Naive thymus-derived CD4-positive, alpha-beta T cell (primary cell): ENCODE measurements at regions of chr18 and their contacts with region 1.

Region 1: DNA sequence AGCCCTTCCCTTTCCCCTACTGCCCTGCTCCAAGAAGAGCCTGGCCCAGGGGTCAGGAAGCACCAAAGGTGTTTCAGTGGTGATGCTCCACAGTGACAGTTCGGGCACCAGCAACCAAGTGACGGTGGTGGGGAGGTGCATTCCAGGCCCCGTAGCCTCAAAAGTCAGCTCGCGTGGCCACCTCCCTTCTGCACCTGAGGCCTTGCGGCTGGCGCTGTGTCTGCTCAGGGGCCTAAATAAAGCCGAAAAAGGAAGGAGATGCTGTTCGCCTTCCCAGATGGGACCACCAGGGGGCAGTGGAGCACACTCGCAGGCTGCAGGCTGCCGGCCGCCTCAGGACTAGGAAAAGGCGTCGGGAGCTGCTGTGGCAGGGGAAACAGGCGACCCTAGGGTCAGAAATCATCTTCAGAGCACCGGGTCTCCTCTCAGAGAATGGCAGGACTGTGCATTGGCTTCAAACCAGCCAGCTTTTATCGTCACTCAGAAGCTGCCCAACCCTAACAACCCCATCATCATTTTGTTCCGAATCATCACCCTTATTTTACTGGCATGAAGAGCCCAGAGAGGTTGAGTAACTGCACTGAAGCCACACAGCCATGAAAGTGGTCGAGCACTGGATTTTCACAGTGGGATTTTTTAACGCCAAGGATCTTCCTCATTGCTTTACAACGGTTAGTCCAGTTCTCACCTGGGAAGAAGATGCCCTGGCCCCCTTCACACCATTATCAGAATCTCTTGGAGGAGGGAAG is 213.0 kb upstream of the CELF4 start:
- DNase-seq: peak in 2 of 9 donors; percentile 1 to 54
- ATAC-seq: no peak
- H3K4me3 ChIP-seq: no peak overlapping the region
- H3K4me3 Mint-ChIP-seq: no peak overlapping the region
- H3K27ac ChIP-seq: no peak overlapping the region
- H3K27ac Mint-ChIP-seq: no peak overlapping the region
- H3K4me1 ChIP-seq: no peaks in the 10 kb centered on the region
- H3K4me1 Mint-ChIP-seq: no peaks in the 10 kb centered on the region
- H3K27me3 ChIP-seq: no peaks in the 10 kb centered on the region
- H3K27me3 Mint-ChIP-seq: peaks cover 0 to 14% (median 8%) of the 10 kb centered on the region in 5 donors

Region 2: GRCh38 chr18:37734406-37734805 is 44.2 kb before region 1 on chr18:
- CTCF ChIA-PET with region 1: no interaction called
- POLR2A ChIA-PET with region 1: no interaction called
- intact Hi-C with region 1: no loop called
- DNase-seq: no peak
- ATAC-seq: no peak
- H3K4me3 ChIP-seq: no peak overlapping the region
- H3K4me3 Mint-ChIP-seq: no peak overlapping the region
- H3K27ac ChIP-seq: no peak overlapping the region
- H3K27ac Mint-ChIP-seq: no peak overlapping the region
- H3K4me1 ChIP-seq: no peaks in the 10 kb centered on the region
- H3K4me1 Mint-ChIP-seq: no peaks in the 10 kb centered on the region
- H3K27me3 ChIP-seq: no peaks in the 10 kb centered on the region
- H3K27me3 Mint-ChIP-seq: peaks cover 0 to 3% (median 0%) of the 10 kb centered on the region in 5 donors

Region 3: GRCh38 chr18:39571511-39571910 is 1792.9 kb after region 1 on chr18:
- CTCF ChIA-PET with region 1: no interaction called
- POLR2A ChIA-PET with region 1: no interaction called
- intact Hi-C with region 1: loop called in 1 of 2 experiments (anchors 5 kb)
- DNase-seq: no peak
- ATAC-seq: no peak
- H3K4me3 ChIP-seq: no peak overlapping the region
- H3K4me3 Mint-ChIP-seq: no peak overlapping the region
- H3K27ac ChIP-seq: no peak overlapping the region
- H3K27ac Mint-ChIP-seq: no peak overlapping the region
- H3K4me1 ChIP-seq: no peaks in the 10 kb centered on the region
- H3K4me1 Mint-ChIP-seq: no peaks in the 10 kb centered on the region
- H3K27me3 ChIP-seq: no peaks in the 10 kb centered on the region
- H3K27me3 Mint-ChIP-seq: no peaks in the 10 kb centered on the region